Esophagus squamous epithelium (tissue), 5 donors: ENCODE measurements at regions of chr10 and their contacts with region 1.

Region 1: DNA sequence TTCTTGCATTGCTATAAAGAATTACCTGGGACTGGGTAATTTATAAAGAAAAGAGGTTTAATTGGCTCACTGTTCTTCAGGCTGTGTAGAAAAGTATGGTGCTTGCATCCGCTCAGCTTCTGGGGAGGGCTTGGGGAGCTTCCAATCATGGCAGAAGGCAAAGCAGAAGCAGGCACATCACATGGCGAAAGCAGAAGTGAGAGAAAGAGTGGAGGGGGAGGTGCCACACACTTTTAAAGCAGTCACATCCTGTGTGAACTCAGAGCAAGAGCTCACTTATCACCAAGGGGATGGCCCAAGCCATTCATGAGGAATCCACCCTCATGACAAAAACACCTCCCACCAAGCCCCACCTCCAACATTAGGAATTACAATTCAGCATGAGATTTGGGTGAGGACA is 303.5 kb downstream of the OTUD1 start:
- DNase-seq: no peak
- H3K4me3 ChIP-seq: no peak overlapping the region
- H3K27ac ChIP-seq: no peak overlapping the region
- H3K4me1 ChIP-seq: no peaks in the 10 kb centered on the region
- H3K27me3 ChIP-seq: peaks cover 0 to 9% (median 0%) of the 10 kb centered on the region in 4 donors
- CTCF ChIP-seq: no peak
- POLR2A ChIP-seq: no peak

Region 2: GRCh38 chr10:23610626-23611307 is 131.6 kb before region 1 on chr10:
- intact Hi-C with region 1: no loop called
- DNase-seq: no peak
- H3K4me3 ChIP-seq: no peak overlapping the region
- H3K27ac ChIP-seq: peak overlapping the region; percentile 29 to 69 (median 48)
- H3K4me1 ChIP-seq: peaks cover 0 to 24% (median 13%) of the 10 kb centered on the region in 3 donors
- H3K27me3 ChIP-seq: no peaks in the 10 kb centered on the region
- CTCF ChIP-seq: no peak
- POLR2A ChIP-seq: no peak

Region 3: GRCh38 chr10:23725548-23725947 is 16.8 kb before region 1 on chr10:
- intact Hi-C with region 1: loop called (anchors 2 kb)
- DNase-seq: no peak
- H3K4me3 ChIP-seq: no peak overlapping the region
- H3K27ac ChIP-seq: no peak overlapping the region
- H3K4me1 ChIP-seq: no peaks in the 10 kb centered on the region
- H3K27me3 ChIP-seq: no peaks in the 10 kb centered on the region
- CTCF ChIP-seq: no peak
- POLR2A ChIP-seq: no peak